ENCODE measurements at regions of chr10 and their contacts with region 1.

Region 1: GRCh38 chr10:122565728-122566206 is 5.2 kb downstream of the DMBT1 start:
- DNase-seq: peak; percentile 79
- H3K4me3 Mint-ChIP-seq: no peak overlapping the region
- H3K27ac Mint-ChIP-seq: no peak overlapping the region
- H3K4me1 Mint-ChIP-seq: no peaks in the 10 kb centered on the region
- H3K27me3 Mint-ChIP-seq: peaks cover 42% of the 10 kb centered on the region

Region 2: DNA sequence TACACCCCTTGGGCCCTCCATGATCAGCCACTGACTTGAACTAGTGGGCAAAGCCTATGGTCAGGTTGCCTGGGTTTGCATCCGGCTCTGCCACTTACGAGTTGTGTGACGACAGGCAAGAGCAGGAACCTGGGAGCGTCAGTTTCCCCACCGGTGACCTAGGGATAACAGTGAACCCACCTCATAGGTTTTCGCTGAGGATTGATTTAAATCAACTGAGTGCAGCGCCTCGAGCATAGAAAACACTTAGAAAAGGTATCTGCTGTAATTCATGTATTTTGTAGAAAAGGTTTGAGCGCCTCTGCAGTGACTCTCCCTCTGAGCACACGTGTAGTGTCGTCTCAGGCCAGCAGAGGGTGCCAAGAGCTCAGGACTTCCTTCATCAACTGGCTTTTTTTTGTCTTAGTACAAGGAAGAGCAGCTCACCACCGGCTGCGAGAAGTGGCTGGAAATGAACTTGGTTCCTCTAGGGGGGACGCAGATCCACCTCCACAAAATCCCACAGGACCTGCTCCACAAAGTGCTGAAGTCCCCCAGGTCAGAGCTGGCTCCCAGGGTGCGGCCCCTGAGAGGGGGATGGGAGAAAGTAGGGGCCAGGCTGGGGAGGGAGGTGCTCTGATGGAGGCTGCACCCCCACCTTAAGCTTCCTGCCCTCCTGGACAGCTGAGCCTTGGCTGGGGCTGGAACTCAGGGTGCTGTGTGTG is 267.0 kb before region 1 on chr10:
- CTCF ChIA-PET with region 1: interaction called, 21 read pairs
- DNase-seq: peak; percentile 76
- H3K4me3 Mint-ChIP-seq: no peak overlapping the region
- H3K27ac Mint-ChIP-seq: no peak overlapping the region
- H3K4me1 Mint-ChIP-seq: peaks cover 14% of the 10 kb centered on the region
- H3K27me3 Mint-ChIP-seq: peaks cover 30% of the 10 kb centered on the region

Region 3: DNA sequence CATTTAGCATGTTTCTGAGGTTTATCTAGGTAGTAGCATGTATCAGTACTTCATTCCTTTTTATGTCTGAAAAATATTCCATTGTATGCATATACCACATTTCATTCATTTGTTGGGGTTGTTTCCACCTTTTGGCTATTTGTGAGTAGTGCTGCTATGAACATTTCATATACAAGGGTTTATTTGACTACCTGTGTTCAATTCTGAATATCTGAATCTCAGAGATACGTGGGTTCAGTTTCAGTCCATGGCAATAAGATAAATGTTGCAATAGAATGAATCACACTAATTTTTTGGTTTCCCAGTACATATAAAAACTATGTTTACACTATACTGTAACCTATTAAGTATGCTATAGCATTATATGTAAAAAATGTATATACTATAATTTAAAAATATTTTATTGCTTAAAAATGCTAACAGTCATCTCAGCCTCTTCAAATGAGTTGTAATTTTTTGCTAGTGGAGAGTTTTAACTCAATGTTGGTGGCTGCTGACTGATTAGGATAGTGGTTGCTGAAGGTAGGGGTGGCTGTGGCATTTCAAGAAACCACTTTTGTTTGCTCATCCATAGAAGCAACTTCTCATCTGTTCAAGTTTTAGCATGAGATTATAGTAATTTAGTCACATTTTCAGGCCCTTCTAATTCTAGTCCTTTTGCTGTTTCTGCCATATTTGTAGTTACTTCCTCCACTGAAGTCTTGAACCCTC is 177.3 kb before region 1 on chr10:
- CTCF ChIA-PET with region 1: no interaction called
- DNase-seq: no peak
- H3K4me3 Mint-ChIP-seq: no peak overlapping the region
- H3K27ac Mint-ChIP-seq: no peak overlapping the region
- H3K4me1 Mint-ChIP-seq: peaks cover 13% of the 10 kb centered on the region
- H3K27me3 Mint-ChIP-seq: no peaks in the 10 kb centered on the region

Region 4: DNA sequence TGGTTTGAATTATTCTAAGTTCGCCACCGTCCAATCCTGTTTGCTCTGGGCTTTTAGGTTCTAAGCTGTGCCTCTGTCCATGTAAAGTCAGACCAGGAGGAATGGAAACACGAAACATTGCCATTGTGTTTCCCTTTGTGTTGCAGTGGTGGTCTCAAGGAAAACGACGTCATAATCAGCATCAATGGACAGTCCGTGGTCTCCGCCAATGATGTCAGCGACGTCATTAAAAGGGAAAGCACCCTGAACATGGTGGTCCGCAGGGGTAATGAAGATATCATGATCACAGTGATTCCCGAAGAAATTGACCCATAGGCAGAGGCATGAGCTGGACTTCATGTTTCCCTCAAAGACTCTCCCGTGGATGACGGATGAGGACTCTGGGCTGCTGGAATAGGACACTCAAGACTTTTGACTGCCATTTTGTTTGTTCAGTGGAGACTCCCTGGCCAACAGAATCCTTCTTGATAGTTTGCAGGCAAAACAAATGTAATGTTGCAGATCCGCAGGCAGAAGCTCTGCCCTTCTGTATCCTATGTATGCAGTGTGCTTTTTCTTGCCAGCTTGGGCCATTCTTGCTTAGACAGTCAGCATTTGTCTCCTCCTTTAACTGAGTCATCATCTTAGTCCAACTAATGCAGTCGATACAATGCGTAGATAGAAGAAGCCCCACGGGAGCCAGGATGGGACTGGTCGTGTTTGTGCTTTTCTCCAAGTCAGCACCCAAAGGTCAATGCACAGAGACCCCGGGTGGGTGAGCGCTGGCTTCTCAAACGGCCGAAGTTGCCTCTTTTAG is 51.5 kb before region 1 on chr10:
- CTCF ChIA-PET with region 1: interaction called, 10 read pairs
- DNase-seq: no peak
- H3K4me3 Mint-ChIP-seq: no peak overlapping the region
- H3K27ac Mint-ChIP-seq: no peak overlapping the region
- H3K4me1 Mint-ChIP-seq: peaks cover 25% of the 10 kb centered on the region
- H3K27me3 Mint-ChIP-seq: peaks cover 10% of the 10 kb centered on the region

Region 5: DNA sequence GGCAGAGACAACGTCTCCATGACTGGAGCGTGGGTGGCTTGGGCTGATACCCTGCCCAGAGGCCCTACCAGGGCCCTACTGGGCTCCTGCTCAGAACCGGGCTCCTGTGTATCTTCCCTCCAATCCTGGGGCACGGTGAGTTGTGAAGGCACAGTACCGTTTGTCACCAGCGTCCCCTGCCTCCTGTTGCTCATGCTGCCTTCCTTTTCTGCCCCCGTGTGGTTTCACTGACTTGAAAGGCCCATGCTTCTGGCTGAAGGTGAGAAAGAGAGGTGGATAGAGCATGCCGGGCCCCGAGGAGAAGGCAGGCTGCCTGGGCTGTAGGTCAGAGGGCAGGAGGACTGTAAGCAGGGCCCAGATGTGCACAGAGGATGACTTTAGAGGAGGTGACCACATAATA is 14.3 kb before region 1 on chr10:
- CTCF ChIA-PET with region 1: interaction called, 21 read pairs
- DNase-seq: peak; percentile 36
- H3K4me3 Mint-ChIP-seq: no peak overlapping the region
- H3K27ac Mint-ChIP-seq: peak overlapping the region; percentile 39
- H3K4me1 Mint-ChIP-seq: peaks cover 13% of the 10 kb centered on the region
- H3K27me3 Mint-ChIP-seq: peaks cover 7% of the 10 kb centered on the region

Region 6: GRCh38 chr10:122829454-122829853 is 263.7 kb after region 1 on chr10:
- CTCF ChIA-PET with region 1: no interaction called
- DNase-seq: no peak
- H3K4me3 Mint-ChIP-seq: no peak overlapping the region
- H3K27ac Mint-ChIP-seq: no peak overlapping the region
- H3K4me1 Mint-ChIP-seq: no peaks in the 10 kb centered on the region
- H3K27me3 Mint-ChIP-seq: peaks cover 16% of the 10 kb centered on the region

Measured in activated naive CD4-positive, alpha-beta T cell treated with anti-CD3 and anti-CD28 coated beads, Interleukin-2, amount 10 ng/mL, durations not matched to agents 7 days and 5 days (primary cell).